Activated CD4-positive, alpha-beta T cell treated with anti-CD3 and anti-CD28 coated beads, Interleukin-2, amount 10 ng/mL, durations not matched to agents 24 days and 14 days (primary cell): ENCODE measurements at regions of chr22 and their contacts with region 1.

Region 1: DNA sequence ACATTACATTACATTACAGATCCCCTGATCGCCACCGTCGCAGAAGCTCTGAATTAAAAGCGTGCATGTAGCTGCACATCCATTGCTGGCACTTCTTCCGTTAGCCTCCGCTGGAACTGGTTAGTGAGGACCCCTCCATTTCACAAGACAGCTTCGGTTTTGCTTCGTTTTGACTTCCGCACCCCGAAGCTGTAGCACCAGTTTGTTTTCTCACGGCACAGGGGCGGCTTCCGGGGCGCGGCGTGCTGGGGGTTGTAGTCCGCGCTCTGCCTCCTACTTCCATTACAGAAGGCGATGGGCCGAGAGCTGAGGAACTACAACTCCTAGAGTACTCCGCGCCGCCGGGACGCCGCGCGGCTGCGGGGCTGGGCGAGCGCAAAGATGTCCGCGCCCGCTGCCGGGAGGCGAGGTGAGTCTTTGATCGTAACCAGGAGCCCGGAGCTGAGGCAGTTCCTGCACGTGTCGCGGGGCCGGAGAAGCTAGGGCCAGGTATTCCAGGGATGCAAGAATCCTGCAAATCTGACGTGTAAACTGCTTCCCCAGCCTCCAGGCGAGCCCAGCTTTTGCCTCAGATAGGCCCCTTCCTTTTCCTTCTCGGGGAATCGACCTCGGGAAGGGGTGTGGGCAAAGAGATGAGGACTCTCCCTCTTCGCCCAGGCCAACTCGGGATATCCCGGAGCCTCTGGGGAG is at the start of gene PEX26:
- DNase-seq: peak; percentile 99
- H3K4me3 Mint-ChIP-seq: peak within 1 kb of the TSS; percentile 96
- H3K27ac Mint-ChIP-seq: peak within 1 kb of the TSS; percentile 93
- H3K4me1 Mint-ChIP-seq: peaks cover 39% of the 10 kb centered on the region
- H3K27me3 Mint-ChIP-seq: no peaks in the 10 kb centered on the region
- total RNA-seq, gene PEX26: 53.5 and 54.0 TPM in 2 replicates

Region 2: GRCh38 chr22:17077255-17077654 is 1000.5 kb before region 1 on chr22:
- intact Hi-C with region 1: loop called (anchors 5 kb)
- DNase-seq: no peak
- H3K4me3 Mint-ChIP-seq: no peak overlapping the region
- H3K27ac Mint-ChIP-seq: no peak overlapping the region
- H3K4me1 Mint-ChIP-seq: peaks cover 18% of the 10 kb centered on the region
- H3K27me3 Mint-ChIP-seq: peaks cover 29% of the 10 kb centered on the region

Region 3: GRCh38 chr22:17742527-17742902 is 335.3 kb before region 1 on chr22:
- intact Hi-C with region 1: loop called (anchors 1 kb)
- DNase-seq: peak; percentile 89
- H3K4me3 Mint-ChIP-seq: no peak overlapping the region
- H3K27ac Mint-ChIP-seq: no peak overlapping the region
- H3K4me1 Mint-ChIP-seq: no peaks in the 10 kb centered on the region
- H3K27me3 Mint-ChIP-seq: no peaks in the 10 kb centered on the region

Region 4: GRCh38 chr22:17830043-17830961 is 247.5 kb before region 1 on chr22:
- intact Hi-C with region 1: loop called (anchors 1 kb)
- DNase-seq: peak; percentile 95
- H3K4me3 Mint-ChIP-seq: no peak overlapping the region
- H3K27ac Mint-ChIP-seq: no peak overlapping the region
- H3K4me1 Mint-ChIP-seq: peaks cover 5% of the 10 kb centered on the region
- H3K27me3 Mint-ChIP-seq: no peaks in the 10 kb centered on the region

Region 5: GRCh38 chr22:18001040-18001893 is 76.5 kb before region 1 on chr22:
- intact Hi-C with region 1: loop called (anchors 2 kb)
- DNase-seq: peak; percentile 91
- H3K4me3 Mint-ChIP-seq: peak overlapping the region; percentile 85
- H3K27ac Mint-ChIP-seq: peak overlapping the region; percentile 89
- H3K4me1 Mint-ChIP-seq: peaks cover 40% of the 10 kb centered on the region
- H3K27me3 Mint-ChIP-seq: peaks cover 22% of the 10 kb centered on the region

Region 6: GRCh38 chr22:18119409-18120110 is 41.8 kb after region 1 on chr22:
- intact Hi-C with region 1: no loop called
- DNase-seq: no peak
- H3K4me3 Mint-ChIP-seq: no peak overlapping the region
- H3K27ac Mint-ChIP-seq: peak overlapping the region; percentile 20
- H3K4me1 Mint-ChIP-seq: peaks cover 9% of the 10 kb centered on the region
- H3K27me3 Mint-ChIP-seq: no peaks in the 10 kb centered on the region

Region 7: GRCh38 chr22:18148293-18148965 is 70.6 kb after region 1 on chr22:
- intact Hi-C with region 1: loop called (anchors 2 kb)
- DNase-seq: no peak
- H3K4me3 Mint-ChIP-seq: peak overlapping the region; percentile 87
- H3K27ac Mint-ChIP-seq: no peak overlapping the region
- H3K4me1 Mint-ChIP-seq: peaks cover 41% of the 10 kb centered on the region
- H3K27me3 Mint-ChIP-seq: no peaks in the 10 kb centered on the region